ENCODE measurements at regions of chr10 and their contacts with region 1.

Region 1: GRCh38 chr10:75042292-75042974 is 69.0 kb upstream of the SAMD8 start:
- DNase-seq: no peak
- H3K4me3 ChIP-seq: no peak overlapping the region
- H3K27ac ChIP-seq: no peak overlapping the region
- H3K4me1 ChIP-seq: no peaks in the 10 kb centered on the region
- H3K27me3 ChIP-seq: no peaks in the 10 kb centered on the region
- CTCF ChIP-seq: no peak
- EP300 ChIP-seq: no peak
- POLR2A ChIP-seq: no peak
- RAD21 ChIP-seq: no peak

Region 2: DNA sequence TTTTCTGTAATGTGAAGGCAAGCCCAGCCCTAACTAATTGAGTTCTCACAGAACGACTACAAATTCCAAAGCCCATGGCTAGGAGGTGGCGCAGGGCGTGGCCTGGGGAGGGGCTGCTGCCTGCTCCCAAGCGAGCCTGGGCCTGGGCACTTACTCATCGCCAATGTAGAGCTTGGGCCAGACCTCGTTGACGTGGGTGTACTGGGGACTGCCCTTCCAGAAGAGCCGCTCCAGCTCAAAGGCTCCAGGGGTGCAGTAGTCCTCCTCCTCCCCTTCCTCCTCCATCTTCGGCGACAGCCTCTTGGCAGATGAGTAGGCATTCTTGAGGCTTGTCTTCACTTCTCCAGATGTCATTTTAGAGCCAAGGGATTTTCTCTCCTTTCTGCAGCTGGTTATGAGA is 15.7 kb after region 1 on chr10:
- CTCF ChIA-PET with region 1: interaction called, 14 read pairs
- POLR2A ChIA-PET with region 1: no interaction called
- DNase-seq: no peak
- H3K4me3 ChIP-seq: peak overlapping the region in 1 of 4 experiments; percentile 25; a peak in 1 of 8 replicates
- H3K27ac ChIP-seq: no peak overlapping the region
- H3K4me1 ChIP-seq: peaks cover 0 to 5% (median 0%) of the 10 kb centered on the region in 4 experiments; a peak in 1 of 7 replicates
- H3K27me3 ChIP-seq: no peaks in the 10 kb centered on the region
- CTCF ChIP-seq: no peak
- EP300 ChIP-seq: no peak
- POLR2A ChIP-seq: no peak
- RAD21 ChIP-seq: no peak

Measured in H1 (cell line).